HCT116 (cell line): ENCODE measurements at regions of chr12 and their contacts with region 1.

Region 1: GRCh38 chr12:119556854-119557253 is 36.7 kb upstream of the TMEM233 start:
- DNase-seq: no peak
- ATAC-seq: no peak
- H3K4me3 ChIP-seq: no peak overlapping the region
- H3K27ac ChIP-seq: no peak overlapping the region
- H3K4me1 ChIP-seq: no peaks in the 10 kb centered on the region
- H3K27me3 ChIP-seq: peaks cover 26% of the 10 kb centered on the region
- CTCF ChIP-seq: no peak
- POLR2A ChIP-seq: no peak
- RAD21 ChIP-seq: no peak

Region 2: DNA sequence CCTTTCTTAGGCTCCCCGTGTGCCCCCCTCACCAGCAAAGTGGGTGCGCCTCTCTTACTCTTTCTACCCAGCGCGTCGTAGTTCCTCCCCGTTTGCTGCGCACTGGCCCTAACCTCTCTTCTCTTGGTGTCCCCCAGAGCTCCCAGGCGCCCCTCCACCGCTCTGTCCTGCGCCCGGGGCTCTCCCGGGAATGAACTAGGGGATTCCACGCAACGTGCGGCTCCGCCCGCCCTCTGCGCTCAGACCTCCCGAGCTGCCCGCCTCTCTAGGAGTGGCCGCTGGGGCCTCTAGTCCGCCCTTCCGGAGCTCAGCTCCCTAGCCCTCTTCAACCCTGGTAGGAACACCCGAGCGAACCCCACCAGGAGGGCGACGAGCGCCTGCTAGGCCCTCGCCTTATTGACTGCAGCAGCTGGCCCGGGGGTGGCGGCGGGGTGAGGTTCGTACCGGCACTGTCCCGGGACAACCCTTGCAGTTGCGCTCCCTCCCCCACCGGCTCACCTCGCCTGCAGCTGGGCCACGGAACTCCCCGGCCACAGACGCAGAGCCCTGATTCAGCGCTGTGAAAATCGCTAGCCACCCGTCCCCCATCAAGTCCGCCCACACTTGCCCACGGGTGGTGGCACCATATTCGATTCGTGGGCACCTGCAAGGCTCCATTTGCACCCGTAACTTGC is 38.1 kb after region 1 on chr12:
- CTCF ChIA-PET with region 1: no interaction called
- POLR2A ChIA-PET with region 1: no interaction called
- RAD21 ChIA-PET with region 1: no interaction called
- intact Hi-C with region 1: loop called (anchors 1 kb)
- DNase-seq: no peak
- ATAC-seq: no peak
- H3K4me3 ChIP-seq: no peak overlapping the region
- H3K27ac ChIP-seq: no peak overlapping the region
- H3K4me1 ChIP-seq: no peaks in the 10 kb centered on the region
- H3K27me3 ChIP-seq: peaks cover 26% of the 10 kb centered on the region; the same call in 1 of the 2 replicates
- CTCF ChIP-seq: no peak
- POLR2A ChIP-seq: no peak
- RAD21 ChIP-seq: no peak